Ascending aorta (tissue), 2 donors: ENCODE measurements at regions of chr10 and their contacts with region 1.

Region 1: GRCh38 chr10:48306265-48306869 is at the start of gene MAPK8:
- DNase-seq: peak; percentile 71 to 95
- H3K4me3 ChIP-seq: peak within 1 kb of the TSS; percentile 88 to 99
- H3K27ac ChIP-seq: peak within 1 kb of the TSS; percentile 94 to 96
- H3K4me1 ChIP-seq: peaks cover 0 to 7% of the 10 kb centered on the region in 2 donors
- H3K27me3 ChIP-seq: no peaks in the 10 kb centered on the region
- CTCF ChIP-seq: no peak
- total RNA-seq, gene MAPK8: 7.7 TPM

Region 2: GRCh38 chr10:48231699-48232315 is 74.6 kb before region 1 on chr10:
- intact Hi-C with region 1: no loop called
- DNase-seq: no peak
- H3K4me3 ChIP-seq: no peak overlapping the region
- H3K27ac ChIP-seq: no peak overlapping the region
- H3K4me1 ChIP-seq: no peaks in the 10 kb centered on the region
- H3K27me3 ChIP-seq: no peaks in the 10 kb centered on the region
- CTCF ChIP-seq: no peak

Region 3: DNA sequence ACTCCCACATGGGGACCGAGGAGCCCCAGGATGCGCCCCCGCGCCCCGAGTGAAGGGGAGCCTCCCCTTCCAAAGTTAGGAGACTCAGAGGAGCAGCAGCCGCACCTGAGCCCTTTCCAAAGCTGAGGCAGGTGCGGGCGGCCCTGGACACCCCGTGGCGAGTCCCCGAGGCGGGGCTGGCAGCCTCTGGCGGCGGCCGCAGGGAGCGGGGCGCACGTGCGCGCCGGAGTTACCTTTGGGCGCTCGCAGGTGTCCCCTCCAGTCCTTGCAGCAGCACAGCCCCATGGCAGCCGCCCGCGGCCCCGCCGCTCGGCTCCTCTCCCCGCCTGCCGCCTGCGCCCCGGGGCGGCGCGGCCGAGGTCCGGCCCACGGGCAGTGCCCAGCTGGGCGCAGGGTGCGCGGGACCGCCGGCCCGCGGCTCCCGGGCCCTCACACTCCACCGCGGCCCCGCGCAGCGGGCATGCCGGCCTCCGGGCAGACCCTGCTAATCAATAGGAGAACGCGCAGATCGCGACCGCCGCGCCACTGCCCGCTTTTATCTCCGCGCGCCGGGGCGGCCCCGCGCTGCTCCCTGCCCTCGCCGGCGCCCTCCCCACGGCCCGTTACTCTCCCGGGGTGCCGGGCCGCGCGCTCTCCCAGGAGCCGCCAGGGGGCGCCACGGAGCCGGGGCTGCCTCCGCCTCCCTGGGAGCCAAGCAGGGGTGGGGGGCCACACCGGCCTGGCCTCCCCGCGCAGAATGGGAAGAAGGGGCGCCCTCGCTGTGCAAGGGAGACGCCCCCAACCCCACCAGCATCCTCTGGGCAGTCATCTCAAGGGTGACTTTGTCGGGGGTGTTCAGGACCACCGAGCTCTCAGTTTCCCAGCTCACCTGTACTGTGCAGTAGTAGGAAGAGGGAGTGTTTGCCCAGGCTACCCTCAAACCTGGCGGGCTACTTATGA is 217.7 kb after region 1 on chr10:
- intact Hi-C with region 1: loop called (anchors 2 kb)
- DNase-seq: no peak
- H3K4me3 ChIP-seq: peak overlapping the region; percentile 54 to 71
- H3K27ac ChIP-seq: peak overlapping the region in 1 of 2 donors; percentile 28
- H3K4me1 ChIP-seq: peaks cover 0 to 15% of the 10 kb centered on the region in 2 donors
- H3K27me3 ChIP-seq: no peaks in the 10 kb centered on the region
- CTCF ChIP-seq: peak; percentile 30 to 50 (median 39)

Region 4: GRCh38 chr10:49109669-49110340 is 803.4 kb after region 1 on chr10:
- intact Hi-C with region 1: loop called (anchors 5 kb)
- DNase-seq: peak in 1 of 2 donors; percentile 75
- H3K4me3 ChIP-seq: peak overlapping the region in 1 of 2 donors; percentile 41
- H3K27ac ChIP-seq: peak overlapping the region; percentile 73 to 81
- H3K4me1 ChIP-seq: peaks cover 29 to 91% of the 10 kb centered on the region in 2 donors
- H3K27me3 ChIP-seq: no peaks in the 10 kb centered on the region
- CTCF ChIP-seq: no peak